ENCODE measurements at regions of chr12 and their contacts with region 1.

Region 1: GRCh38 chr12:48716493-48717251 is at the start of gene CCNT1:
- DNase-seq: peak; percentile 91 to 100 (median 97)

Region 2: GRCh38 chr12:48681738-48682532 is 34.7 kb before region 1 on chr12 and contains the start of gene KANSL2:
- intact Hi-C with region 1: loop called (anchors 5 kb)
- DNase-seq: peak; percentile 97 to 100 (median 98)

Measured in posterior cingulate gyrus (tissue), 11 donors.